IMR-90 (cell line): ENCODE measurements at regions of chr7 and their contacts with region 1.

Region 1: DNA sequence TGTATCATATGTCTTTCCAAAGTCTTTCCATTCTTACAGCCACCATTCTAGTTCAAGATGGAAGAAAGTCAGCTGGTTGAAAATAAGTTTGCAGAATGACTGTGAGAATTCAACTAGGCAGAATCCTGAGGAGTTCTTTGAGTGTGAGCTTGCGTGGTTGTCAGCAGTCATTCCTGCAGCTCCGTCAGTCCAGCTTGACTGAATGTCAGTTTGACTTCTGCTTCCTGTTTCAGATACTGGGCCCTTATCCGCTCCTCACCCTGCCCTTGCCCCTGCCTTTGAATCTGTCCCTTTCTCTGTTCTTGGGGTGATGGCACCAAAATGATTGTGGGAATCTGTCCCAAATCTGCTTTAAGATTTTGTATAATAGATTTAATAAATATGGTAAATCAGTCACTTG is 27.8 kb downstream of the SLC26A5 start:
- DNase-seq: no peak
- ATAC-seq: no peak
- H3K4me3 ChIP-seq: no peak overlapping the region
- H3K27ac ChIP-seq: no peak overlapping the region
- H3K4me1 ChIP-seq: no peaks in the 10 kb centered on the region
- H3K27me3 ChIP-seq: no peaks in the 10 kb centered on the region; the same call in 1 of the 2 replicates
- CTCF ChIP-seq: no peak
- POLR2A ChIP-seq: no peak
- RAD21 ChIP-seq: no peak

Region 2: GRCh38 chr7:103379270-103379975 is 38.8 kb before region 1 on chr7:
- CTCF ChIA-PET with region 1: no interaction called
- POLR2A ChIA-PET with region 1: no interaction called
- dilution Hi-C with region 1: no loop called
- in situ Hi-C with region 1: no loop called
- intact Hi-C with region 1: loop called (anchors 5 kb)
- DNase-seq: no peak
- ATAC-seq: no peak
- H3K4me3 ChIP-seq: no peak overlapping the region
- H3K27ac ChIP-seq: no peak overlapping the region
- H3K4me1 ChIP-seq: no peaks in the 10 kb centered on the region; the same call in 1 of the 2 replicates
- H3K27me3 ChIP-seq: peaks cover 7% of the 10 kb centered on the region
- CTCF ChIP-seq: no peak
- POLR2A ChIP-seq: no peak
- RAD21 ChIP-seq: no peak